ENCODE measurements at regions of chr1 and their contacts with region 1.

Region 1: GRCh38 chr1:108125312-108126138 is 74.6 kb downstream of the SLC25A24 start:
- DNase-seq: peak; percentile 82
- H3K4me3 ChIP-seq: no peak overlapping the region
- H3K27ac ChIP-seq: no peak overlapping the region
- H3K4me1 ChIP-seq: no peaks in the 10 kb centered on the region
- H3K27me3 ChIP-seq: peaks cover 4% of the 10 kb centered on the region
- CTCF ChIP-seq: peak; percentile 86

Region 2: DNA sequence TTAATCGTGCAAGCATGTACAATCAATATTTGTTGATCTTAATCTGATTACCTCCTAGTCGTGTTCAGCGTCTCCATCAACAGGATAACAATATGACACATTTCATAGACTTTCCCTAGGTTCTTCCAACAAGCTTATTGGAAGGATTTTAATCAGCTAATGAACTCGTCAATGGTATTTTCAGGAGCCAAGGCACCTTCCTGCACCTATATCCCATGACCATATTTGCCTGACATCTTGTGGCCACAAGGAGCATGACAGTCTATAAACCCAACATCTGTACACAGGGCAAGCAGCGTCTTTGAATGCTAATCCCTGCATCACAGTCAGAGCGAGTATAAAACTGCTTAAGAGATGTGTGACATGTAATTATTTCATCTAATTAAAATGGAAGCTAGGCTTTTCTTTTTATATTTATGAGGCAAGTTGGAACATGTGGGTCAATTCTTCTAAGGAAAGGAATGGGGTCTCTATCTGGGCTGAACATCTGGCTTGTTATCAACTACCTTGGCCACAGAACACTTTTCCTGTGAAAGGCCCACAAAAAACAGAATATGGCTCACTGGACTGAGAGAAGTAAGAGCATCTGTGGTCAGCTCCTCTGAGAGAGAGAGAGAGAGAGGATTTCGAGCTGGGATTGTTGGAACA is 595.9 kb before region 1 on chr1:
- CTCF ChIA-PET with region 1: no interaction called
- POLR2A ChIA-PET with region 1: no interaction called
- intact Hi-C with region 1: no loop called
- DNase-seq: peak; percentile 87
- H3K4me3 ChIP-seq: no peak overlapping the region
- H3K27ac ChIP-seq: no peak overlapping the region
- H3K4me1 ChIP-seq: peaks cover 17% of the 10 kb centered on the region
- H3K27me3 ChIP-seq: no peaks in the 10 kb centered on the region
- CTCF ChIP-seq: peak; percentile 93

Region 3: GRCh38 chr1:107782217-107782845 is 343.2 kb before region 1 on chr1:
- CTCF ChIA-PET with region 1: interaction called, 48 read pairs
- POLR2A ChIA-PET with region 1: interaction called, 4 read pairs
- intact Hi-C with region 1: loop called (anchors 1 kb)
- DNase-seq: peak; percentile 73
- H3K4me3 ChIP-seq: no peak overlapping the region
- H3K27ac ChIP-seq: no peak overlapping the region
- H3K4me1 ChIP-seq: no peaks in the 10 kb centered on the region
- H3K27me3 ChIP-seq: no peaks in the 10 kb centered on the region
- CTCF ChIP-seq: peak; percentile 80

Region 4: DNA sequence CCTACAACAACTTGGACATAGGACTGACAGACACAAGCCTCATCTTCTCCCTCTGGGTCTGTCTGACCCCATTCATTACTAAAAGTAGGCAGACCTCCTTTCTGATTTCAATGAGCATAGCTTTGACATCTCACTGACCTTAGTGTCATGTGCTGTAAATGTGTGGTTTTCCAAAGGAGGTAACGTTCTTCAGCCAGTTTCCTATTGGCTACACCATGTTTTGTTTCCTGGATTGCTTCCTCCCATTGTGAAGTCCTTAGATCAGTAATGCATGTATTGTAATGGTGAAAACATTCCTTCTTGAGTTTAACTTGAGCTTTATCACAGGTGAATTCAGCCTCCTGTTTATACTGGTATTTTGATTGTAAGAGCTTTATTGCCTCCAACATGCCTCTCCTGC is 641.6 kb after region 1 on chr1:
- CTCF ChIA-PET with region 1: no interaction called
- POLR2A ChIA-PET with region 1: no interaction called
- intact Hi-C with region 1: no loop called
- DNase-seq: no peak
- H3K4me3 ChIP-seq: no peak overlapping the region
- H3K27ac ChIP-seq: no peak overlapping the region
- H3K4me1 ChIP-seq: peaks cover 4% of the 10 kb centered on the region
- H3K27me3 ChIP-seq: no peaks in the 10 kb centered on the region
- CTCF ChIP-seq: no peak